Ascending aorta (tissue), 2 donors: ENCODE measurements at regions of chr2 and their contacts with region 1.

Region 1: DNA sequence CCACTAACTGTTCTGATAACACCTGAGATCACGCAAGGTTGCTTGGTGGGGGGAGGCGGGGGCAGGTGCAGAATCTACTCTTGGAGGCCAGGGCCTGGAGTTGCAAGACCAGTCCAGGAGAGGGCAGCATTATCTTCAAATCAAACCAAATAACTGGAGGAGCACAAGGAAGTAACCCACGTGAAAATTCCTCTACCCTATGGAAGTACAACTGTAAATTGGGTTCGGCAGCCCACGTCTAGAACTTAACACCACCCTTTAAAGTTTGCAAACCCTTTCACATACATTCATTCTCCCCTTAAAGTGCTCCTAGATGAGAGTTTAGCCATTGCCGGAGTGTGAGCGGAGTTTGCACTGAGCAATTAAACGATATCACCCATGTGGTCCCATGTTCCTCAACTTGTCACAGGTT is 19.6 kb upstream of the CXCR1 start:
- DNase-seq: peak in 1 of 2 donors; percentile 81
- H3K4me3 ChIP-seq: no peak overlapping the region
- H3K27ac ChIP-seq: no peak overlapping the region
- H3K4me1 ChIP-seq: peaks cover 0 to 6% of the 10 kb centered on the region in 2 donors
- H3K27me3 ChIP-seq: no peaks in the 10 kb centered on the region
- CTCF ChIP-seq: peak; percentile 69 to 89 (median 83)

Region 2: DNA sequence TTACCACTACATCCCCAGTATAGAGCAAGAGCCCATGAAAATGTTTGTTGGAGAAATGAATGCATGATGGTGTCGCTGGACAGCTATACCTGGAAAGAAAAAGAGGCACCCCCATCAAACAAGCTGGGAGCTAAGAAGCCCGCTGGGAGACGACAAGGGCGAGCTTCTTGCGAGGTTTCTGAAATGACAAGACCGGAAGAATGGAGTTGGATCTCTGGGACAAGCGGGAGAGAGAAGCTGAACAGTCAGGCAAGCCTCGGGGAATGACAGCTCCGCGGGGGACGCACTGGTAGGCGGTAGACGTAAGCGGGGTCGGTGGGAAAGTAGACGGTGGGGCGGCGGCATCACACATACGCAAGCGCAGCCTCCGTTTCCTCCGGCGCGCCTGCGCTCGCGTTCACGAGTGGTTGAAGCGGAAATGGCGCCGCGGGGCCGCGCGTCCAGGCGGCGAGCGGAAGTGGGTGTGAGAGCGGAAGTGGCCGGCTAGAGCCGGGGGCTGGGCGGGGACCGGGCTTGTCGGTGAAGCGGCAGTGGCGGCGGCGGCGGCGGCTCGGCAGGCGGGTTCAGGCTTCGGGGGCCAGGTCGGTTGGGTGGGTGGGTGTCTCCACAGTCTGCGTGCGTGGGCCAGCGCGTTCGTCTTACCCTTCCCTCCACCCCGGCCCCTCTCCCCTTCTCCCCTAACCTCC is 30.5 kb after region 1 on chr2 and contains the start of gene ARPC2:
- intact Hi-C with region 1: loop called (anchors 2 kb)
- DNase-seq: peak; percentile 75 to 97
- H3K4me3 ChIP-seq: peak within 1 kb of the TSS; percentile 96
- H3K27ac ChIP-seq: peak within 1 kb of the TSS; percentile 97 to 98
- H3K4me1 ChIP-seq: peaks cover 19 to 35% of the 10 kb centered on the region in 2 donors
- H3K27me3 ChIP-seq: no peaks in the 10 kb centered on the region
- CTCF ChIP-seq: peak in 1 of 3 experiments; percentile 22
- total RNA-seq, gene ARPC2: 237 TPM

Region 3: DNA sequence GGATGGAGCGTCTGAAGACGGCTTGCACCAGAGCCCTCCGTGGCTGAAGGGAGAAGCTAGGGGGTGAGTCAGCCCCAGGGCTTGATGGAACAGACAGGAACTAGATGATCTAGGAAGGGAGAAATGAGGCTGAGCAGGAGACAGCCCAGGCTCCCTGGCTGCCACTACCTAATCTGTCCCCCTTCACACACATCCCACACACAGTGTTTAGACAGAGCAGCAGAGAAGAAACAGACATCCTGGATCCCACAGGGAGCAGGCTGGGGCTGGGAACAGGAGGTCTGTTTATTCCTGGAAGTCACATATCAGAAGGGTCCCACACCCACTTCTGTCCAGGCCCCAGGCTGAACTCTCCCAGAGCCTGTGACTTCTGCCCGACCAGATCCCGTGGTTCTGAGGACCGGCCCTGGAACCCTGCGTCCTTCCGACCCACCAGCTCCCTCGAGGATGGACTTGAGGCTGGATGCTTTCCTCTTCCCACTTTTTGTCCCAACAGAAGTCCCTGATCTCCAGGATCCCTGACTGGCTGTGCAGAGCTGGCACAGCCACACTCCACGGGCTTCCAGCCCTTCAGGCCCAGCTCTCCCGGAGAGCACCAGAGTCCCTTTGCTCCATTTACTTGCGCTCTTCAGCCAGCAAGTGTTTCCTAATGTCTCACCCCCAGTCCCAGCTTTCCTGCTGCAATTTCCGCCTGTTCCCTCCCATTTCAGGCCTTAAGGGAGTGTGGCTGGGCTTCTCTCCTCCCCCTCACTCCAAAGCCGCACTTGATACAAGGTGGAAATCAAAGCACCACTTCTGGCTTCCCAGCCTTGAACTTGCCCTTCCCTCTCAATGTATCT is 73.0 kb after region 1 on chr2:
- intact Hi-C with region 1: loop called (anchors 2 kb)
- DNase-seq: peak; percentile 40 to 81
- H3K4me3 ChIP-seq: no peak overlapping the region
- H3K27ac ChIP-seq: peak overlapping the region; percentile 74 to 79
- H3K4me1 ChIP-seq: peaks cover 14 to 36% of the 10 kb centered on the region in 2 donors
- H3K27me3 ChIP-seq: no peaks in the 10 kb centered on the region
- CTCF ChIP-seq: no peak

Region 4: DNA sequence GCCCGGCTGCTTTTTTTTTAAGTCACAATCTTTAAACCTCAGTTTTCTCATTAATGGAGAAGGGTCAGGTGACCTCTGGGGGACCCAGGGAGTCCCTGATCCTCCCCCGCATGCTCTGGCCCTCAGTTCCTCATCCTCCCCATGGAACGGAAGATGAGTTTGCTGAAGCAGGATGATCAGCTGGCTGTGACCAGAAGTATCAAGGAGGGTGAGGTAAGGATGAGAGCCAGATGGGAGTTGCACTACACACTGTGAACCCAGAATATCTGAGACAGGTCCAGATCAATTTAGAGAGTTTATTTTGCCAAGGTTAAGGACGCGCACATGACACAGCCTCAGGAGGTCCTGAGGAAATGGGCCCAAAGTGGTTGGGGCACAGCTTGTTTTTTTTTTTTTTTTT is 174.1 kb after region 1 on chr2:
- intact Hi-C with region 1: loop called (anchors 5 kb)
- DNase-seq: no peak
- H3K4me3 ChIP-seq: no peak overlapping the region
- H3K27ac ChIP-seq: no peak overlapping the region
- H3K4me1 ChIP-seq: peaks cover 3 to 7% of the 10 kb centered on the region in 2 donors
- H3K27me3 ChIP-seq: no peaks in the 10 kb centered on the region
- CTCF ChIP-seq: no peak

Region 5: DNA sequence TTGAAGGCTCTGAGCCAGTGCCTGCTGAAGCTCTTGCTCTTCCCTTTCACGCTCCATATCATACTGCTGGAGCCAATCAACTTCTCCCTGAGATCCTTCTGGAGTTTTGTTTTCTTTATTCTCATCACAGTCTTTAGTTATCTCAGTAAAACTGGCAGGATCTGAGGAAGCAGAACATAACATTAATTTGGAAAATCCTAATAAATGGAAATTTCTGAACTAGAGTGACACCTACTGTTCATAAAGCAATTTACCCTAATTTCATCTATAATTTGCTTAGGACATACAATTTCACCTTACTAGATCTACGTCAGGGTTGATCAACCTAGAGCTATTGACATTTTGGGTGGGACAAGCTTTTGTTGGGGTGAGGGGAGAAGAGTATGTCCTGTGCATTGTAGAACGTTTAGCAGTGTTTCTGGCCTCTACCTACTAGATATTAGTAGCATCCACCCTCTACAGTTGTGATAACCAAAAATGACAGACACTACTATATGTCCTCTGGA is 279.7 kb after region 1 on chr2:
- intact Hi-C with region 1: loop called (anchors 1 kb)
- DNase-seq: no peak
- H3K4me3 ChIP-seq: no peak overlapping the region
- H3K27ac ChIP-seq: no peak overlapping the region
- H3K4me1 ChIP-seq: no peaks in the 10 kb centered on the region
- H3K27me3 ChIP-seq: no peaks in the 10 kb centered on the region
- CTCF ChIP-seq: peak; percentile 29 to 59 (median 38)